HepG2 (cell line): ENCODE measurements at regions of chr15 and their contacts with region 1.

Region 1: GRCh38 chr15:25508369-25509002 is 69.7 kb upstream of the UBE3A start:
- DNase-seq: peak; percentile 7
- ATAC-seq: peak; percentile 33; the same call in 1 of the 3 replicates
- H3K4me3 ChIP-seq: no peak overlapping the region
- H3K27ac ChIP-seq: no peak overlapping the region
- H3K4me1 ChIP-seq: no peaks in the 10 kb centered on the region
- H3K27me3 ChIP-seq: no peaks in the 10 kb centered on the region
- CTCF ChIP-seq: peak; percentile 66
- EP300 ChIP-seq: no peak
- POLR2A ChIP-seq: no peak
- RAD21 ChIP-seq: no peak

Region 2: GRCh38 chr15:23642413-23643044 is 1866.0 kb before region 1 on chr15:
- CTCF ChIA-PET with region 1: no interaction called
- POLR2A ChIA-PET with region 1: no interaction called
- in situ Hi-C with region 1: no loop called
- intact Hi-C with region 1: loop called (anchors 10 kb)
- DNase-seq: peak; percentile 51
- ATAC-seq: peak; percentile 93
- H3K4me3 ChIP-seq: no peak overlapping the region
- H3K27ac ChIP-seq: no peak overlapping the region
- H3K4me1 ChIP-seq: no peaks in the 10 kb centered on the region
- H3K27me3 ChIP-seq: peaks cover 2% of the 10 kb centered on the region in 2 experiments; a peak in 2 of 5 replicates
- CTCF ChIP-seq: peak; percentile 92
- EP300 ChIP-seq: no peak
- POLR2A ChIP-seq: no peak
- RAD21 ChIP-seq: peak; percentile 85

Region 3: DNA sequence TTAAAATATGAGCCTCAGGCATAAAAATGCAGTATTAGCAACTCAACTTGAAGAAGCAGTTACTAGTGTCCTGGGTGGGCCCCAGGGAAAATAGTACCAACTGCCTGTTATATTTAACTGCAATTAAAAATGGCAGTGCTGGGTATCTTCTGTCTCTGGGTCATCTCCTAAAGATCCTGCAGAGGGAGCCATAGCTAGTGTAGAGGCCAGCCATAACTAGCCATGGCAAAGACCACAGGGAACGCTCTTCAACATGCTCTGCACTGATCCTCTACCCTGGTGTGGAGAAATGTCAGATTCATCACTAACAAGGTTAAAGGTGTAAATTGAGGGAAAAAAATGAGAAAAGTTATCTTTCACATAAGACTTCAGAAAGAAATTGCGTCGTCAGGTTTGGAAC is 372.4 kb before region 1 on chr15:
- CTCF ChIA-PET with region 1: no interaction called
- POLR2A ChIA-PET with region 1: no interaction called
- in situ Hi-C with region 1: no loop called
- intact Hi-C with region 1: loop called (anchors 10 kb)
- DNase-seq: peak; percentile 2
- ATAC-seq: peak; percentile 62
- H3K4me3 ChIP-seq: no peak overlapping the region
- H3K27ac ChIP-seq: no peak overlapping the region
- H3K4me1 ChIP-seq: no peaks in the 10 kb centered on the region
- H3K27me3 ChIP-seq: no peaks in the 10 kb centered on the region
- CTCF ChIP-seq: peak; percentile 41
- EP300 ChIP-seq: no peak
- POLR2A ChIP-seq: no peak
- RAD21 ChIP-seq: no peak

Region 4: DNA sequence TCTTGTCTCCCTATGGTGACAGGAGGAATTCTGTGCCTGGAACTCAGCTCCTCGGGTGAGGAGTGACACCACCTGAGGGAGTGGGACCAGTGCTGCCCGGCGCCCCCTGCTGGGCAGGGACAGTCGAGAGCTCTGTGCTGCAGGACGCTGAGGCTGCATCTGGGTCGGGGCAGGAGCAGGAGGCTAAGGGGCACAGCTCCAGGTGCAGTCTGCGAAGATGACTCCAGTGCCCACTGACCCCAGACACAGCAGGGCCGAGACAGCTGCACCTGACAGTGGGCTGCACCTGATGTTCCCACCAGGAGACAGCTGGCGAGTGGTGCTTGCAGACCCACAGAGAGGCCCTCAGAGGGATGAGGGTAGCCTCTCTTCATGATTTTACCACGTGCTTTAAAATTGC is 201.7 kb after region 1 on chr15:
- CTCF ChIA-PET with region 1: interaction called, 4 read pairs
- POLR2A ChIA-PET with region 1: no interaction called
- in situ Hi-C with region 1: loop called (anchors 10 kb)
- intact Hi-C with region 1: no loop called
- DNase-seq: peak; percentile 18
- ATAC-seq: peak; percentile 97
- H3K4me3 ChIP-seq: no peak overlapping the region
- H3K27ac ChIP-seq: no peak overlapping the region
- H3K4me1 ChIP-seq: no peaks in the 10 kb centered on the region
- H3K27me3 ChIP-seq: no peaks in the 10 kb centered on the region
- CTCF ChIP-seq: peak; percentile 86
- EP300 ChIP-seq: no peak
- POLR2A ChIP-seq: no peak
- RAD21 ChIP-seq: peak; percentile 60

Region 5: GRCh38 chr15:25909325-25909724 is 400.8 kb after region 1 on chr15:
- CTCF ChIA-PET with region 1: no interaction called
- POLR2A ChIA-PET with region 1: no interaction called
- in situ Hi-C with region 1: no loop called
- intact Hi-C with region 1: no loop called
- DNase-seq: no peak
- ATAC-seq: no peak
- H3K4me3 ChIP-seq: no peak overlapping the region
- H3K27ac ChIP-seq: no peak overlapping the region
- H3K4me1 ChIP-seq: no peaks in the 10 kb centered on the region
- H3K27me3 ChIP-seq: no peaks in the 10 kb centered on the region
- CTCF ChIP-seq: no peak
- EP300 ChIP-seq: no peak
- POLR2A ChIP-seq: no peak
- RAD21 ChIP-seq: no peak

Region 6: GRCh38 chr15:25933456-25934158 is 425.1 kb after region 1 on chr15:
- CTCF ChIA-PET with region 1: no interaction called
- POLR2A ChIA-PET with region 1: no interaction called
- in situ Hi-C with region 1: loop called (anchors 25 kb)
- intact Hi-C with region 1: loop called (anchors 5 kb)
- DNase-seq: peak; percentile 47
- ATAC-seq: peak; percentile 99
- H3K4me3 ChIP-seq: peak overlapping the region in 2 of 3 experiments; percentile 24 to 64; a peak in 1 of 6 replicates
- H3K27ac ChIP-seq: no peak overlapping the region
- H3K4me1 ChIP-seq: peaks cover 7% of the 10 kb centered on the region
- H3K27me3 ChIP-seq: no peaks in the 10 kb centered on the region
- CTCF ChIP-seq: peak; percentile 75
- EP300 ChIP-seq: no peak
- POLR2A ChIP-seq: no peak
- RAD21 ChIP-seq: no peak

Region 7: GRCh38 chr15:26260517-26261133 is 752.1 kb after region 1 on chr15:
- CTCF ChIA-PET with region 1: interaction called, 4 read pairs
- POLR2A ChIA-PET with region 1: no interaction called
- in situ Hi-C with region 1: loop called (anchors 25 kb)
- intact Hi-C with region 1: loop called (anchors 5 kb)
- DNase-seq: peak; percentile 1
- ATAC-seq: peak; percentile 81
- H3K4me3 ChIP-seq: no peak overlapping the region
- H3K27ac ChIP-seq: no peak overlapping the region
- H3K4me1 ChIP-seq: no peaks in the 10 kb centered on the region
- H3K27me3 ChIP-seq: no peaks in the 10 kb centered on the region
- CTCF ChIP-seq: peak; percentile 70
- EP300 ChIP-seq: no peak
- POLR2A ChIP-seq: no peak
- RAD21 ChIP-seq: 0 out of 2 replicates have a peak, but pooled peaks have one; percentile 10

Region 8: GRCh38 chr15:26873846-26874245 is 1365.4 kb after region 1 on chr15:
- CTCF ChIA-PET with region 1: no interaction called
- POLR2A ChIA-PET with region 1: no interaction called
- in situ Hi-C with region 1: loop called (anchors 10 kb)
- intact Hi-C with region 1: no loop called
- DNase-seq: no peak
- ATAC-seq: no peak
- H3K4me3 ChIP-seq: no peak overlapping the region
- H3K27ac ChIP-seq: no peak overlapping the region
- H3K4me1 ChIP-seq: no peaks in the 10 kb centered on the region
- H3K27me3 ChIP-seq: no peaks in the 10 kb centered on the region; a peak in 2 of 5 replicates
- CTCF ChIP-seq: no peak
- EP300 ChIP-seq: no peak
- POLR2A ChIP-seq: no peak
- RAD21 ChIP-seq: no peak